Tibial artery (tissue), 4 donors: ENCODE measurements at regions of chr12 and their contacts with region 1.

Region 1: DNA sequence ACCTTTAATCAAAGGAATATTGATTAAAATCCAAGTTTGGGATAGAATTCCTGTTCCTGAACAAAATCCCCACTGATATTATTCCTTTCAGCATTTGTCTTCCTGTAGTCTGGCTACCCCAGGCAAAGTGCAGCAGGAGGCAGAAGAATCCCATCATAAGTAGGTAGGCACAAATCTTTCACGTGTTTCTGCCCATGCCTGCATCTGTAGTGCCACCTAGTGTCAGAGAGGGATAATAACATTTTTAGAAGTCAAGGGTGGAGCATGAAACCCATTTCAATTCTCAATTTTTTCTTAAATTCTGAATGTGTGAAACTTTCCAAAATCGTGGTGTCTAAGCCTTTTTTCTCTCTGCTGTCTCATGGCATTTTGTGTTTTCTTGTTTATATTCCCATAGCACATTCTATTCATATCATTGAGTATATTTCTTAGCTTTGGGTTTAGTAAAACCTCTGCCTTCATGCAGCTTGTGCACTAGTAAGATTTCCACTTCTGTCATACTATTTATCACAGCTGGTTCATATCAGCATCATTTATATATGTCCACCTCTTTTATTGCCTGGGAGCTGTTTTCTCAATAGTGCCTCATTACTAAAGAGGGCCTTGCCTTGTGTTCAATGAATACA is 47.8 kb upstream of the RERG start:
- DNase-seq: no peak
- H3K4me3 ChIP-seq: no peak overlapping the region
- H3K27ac ChIP-seq: no peak overlapping the region
- H3K4me1 ChIP-seq: peaks cover 0 to 5% (median under 1%) of the 10 kb centered on the region in 4 donors
- H3K27me3 ChIP-seq: no peaks in the 10 kb centered on the region
- CTCF ChIP-seq: peak; percentile 84 to 89

Region 2: DNA sequence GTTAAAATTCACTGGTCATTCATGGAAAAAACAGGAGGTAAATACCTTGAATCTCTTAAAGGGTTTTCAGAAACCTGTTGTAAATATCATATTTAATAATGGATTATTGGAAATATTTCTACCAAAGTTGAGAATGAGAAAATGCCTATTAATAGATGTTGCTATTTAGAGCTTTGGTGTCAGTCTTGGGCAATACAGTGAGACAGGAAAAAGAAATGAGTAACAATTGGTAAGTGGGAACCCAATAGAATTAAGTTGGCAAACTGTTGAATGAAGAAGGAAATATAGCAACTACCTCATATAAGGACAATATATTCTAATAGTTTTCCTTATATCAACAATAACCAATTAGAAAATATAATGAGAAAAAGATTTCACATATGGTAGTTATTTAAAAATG is 825.5 kb before region 1 on chr12:
- intact Hi-C with region 1: no loop called
- DNase-seq: no peak
- H3K4me3 ChIP-seq: no peak overlapping the region
- H3K27ac ChIP-seq: peak overlapping the region; percentile 46 to 65
- H3K4me1 ChIP-seq: peaks cover 0 to 28% (median 2%) of the 10 kb centered on the region in 4 donors
- H3K27me3 ChIP-seq: no peaks in the 10 kb centered on the region
- CTCF ChIP-seq: no peak

Region 3: DNA sequence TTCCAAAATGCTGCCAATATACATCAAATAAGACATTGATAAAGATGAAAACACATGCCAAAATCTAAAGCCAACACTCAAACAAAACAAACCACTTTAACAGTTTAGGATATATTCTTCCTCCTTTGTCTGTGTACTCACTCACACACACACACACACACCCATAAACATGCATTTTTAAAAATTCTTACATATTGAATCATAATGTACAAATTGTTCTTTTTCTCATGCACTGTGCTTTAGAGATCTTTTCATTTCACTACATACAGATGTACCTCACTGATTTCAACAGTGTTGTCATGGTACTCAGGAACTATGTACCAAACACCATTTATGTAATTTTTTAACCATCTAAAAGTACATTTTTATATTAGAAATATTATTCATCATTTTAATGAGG is 38.3 kb before region 1 on chr12:
- intact Hi-C with region 1: loop called (anchors 5 kb)
- DNase-seq: no peak
- H3K4me3 ChIP-seq: no peak overlapping the region
- H3K27ac ChIP-seq: no peak overlapping the region
- H3K4me1 ChIP-seq: peaks cover 0 to 7% (median 0%) of the 10 kb centered on the region in 4 donors
- H3K27me3 ChIP-seq: no peaks in the 10 kb centered on the region
- CTCF ChIP-seq: no peak